Left ventricle myocardium superior (tissue), 1 donor: ENCODE measurements at regions of chr9 and their contacts with region 1.

Region 1: GRCh38 chr9:19925817-19926503 is 137.1 kb upstream of the SLC24A2 start:
- DNase-seq: peak; percentile 58
- ATAC-seq: peak; percentile 98

Region 2: DNA sequence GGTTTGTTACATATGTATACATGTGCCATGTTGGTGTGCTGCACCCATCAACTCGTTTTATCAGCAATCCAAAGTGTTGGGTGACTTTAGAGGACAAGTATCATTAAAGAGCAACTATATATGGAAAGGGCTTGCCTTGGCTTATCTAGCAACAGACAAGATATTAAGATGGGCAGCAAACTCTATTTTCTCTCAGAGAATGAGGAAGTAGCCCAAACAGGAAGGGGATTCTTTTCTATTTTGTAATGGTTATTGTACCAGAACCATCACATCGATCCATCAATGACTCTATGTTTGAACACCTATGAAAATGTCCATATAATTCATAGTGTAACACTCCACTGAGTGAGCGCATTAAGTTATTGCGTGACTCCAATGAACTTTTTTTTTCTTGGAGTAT is 123.0 kb after region 1 on chr9:
- intact Hi-C with region 1: no loop called
- DNase-seq: no peak
- ATAC-seq: no peak

Region 3: GRCh38 chr9:21102305-21102704 is 1176.3 kb after region 1 on chr9:
- intact Hi-C with region 1: loop called (anchors 10 kb)
- DNase-seq: no peak
- ATAC-seq: no peak